ENCODE measurements at regions of chr1 and their contacts with region 1.

Region 1: DNA sequence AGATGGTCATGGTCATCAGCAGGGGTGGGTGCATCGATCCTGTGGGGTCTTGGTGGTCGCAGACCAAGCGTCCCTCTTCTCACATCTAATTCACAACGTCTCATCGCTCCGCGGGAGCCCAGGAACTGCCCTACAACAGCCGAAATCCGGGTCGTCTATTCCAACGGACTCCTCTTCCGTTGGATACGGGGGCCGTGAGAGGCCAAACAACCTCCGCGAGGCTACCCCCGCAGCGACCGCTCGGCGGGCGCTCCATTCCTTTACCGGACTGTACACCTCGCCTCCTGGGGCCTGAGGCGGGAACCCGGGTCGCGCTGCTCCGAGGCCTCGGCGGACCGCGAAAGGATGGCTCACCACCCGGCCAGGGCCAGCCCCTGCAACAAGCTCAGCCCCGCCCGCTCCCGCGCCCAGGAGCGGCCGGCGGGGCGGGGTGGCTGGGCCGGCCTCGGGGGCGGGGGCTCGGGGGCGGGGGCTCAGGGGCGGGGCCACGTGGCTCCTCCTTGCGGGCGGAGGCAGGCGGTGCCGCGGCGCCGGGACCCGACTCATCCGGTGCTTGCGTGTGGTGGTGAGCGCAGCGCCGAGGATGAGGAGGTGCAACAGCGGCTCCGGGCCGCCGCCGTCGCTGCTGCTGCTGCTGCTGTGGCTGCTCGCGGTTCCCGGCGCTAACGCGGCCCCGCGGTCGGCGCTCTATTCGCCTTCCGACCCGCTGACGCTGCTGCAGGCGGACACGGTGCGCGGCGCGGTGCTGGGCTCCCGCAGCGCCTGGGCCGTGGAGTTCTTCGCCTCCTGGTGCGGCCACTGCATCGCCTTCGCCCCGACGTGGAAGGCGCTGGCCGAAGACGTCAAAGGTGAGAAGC is at the start of gene QSOX1:
- DNase-seq: peak; percentile 86
- ATAC-seq: peak; percentile 80
- H3K4me3 ChIP-seq: peak within 1 kb of the TSS; percentile 94
- H3K27ac ChIP-seq: peak within 1 kb of the TSS; percentile 99
- H3K4me1 ChIP-seq: peaks cover 33% of the 10 kb centered on the region
- H3K27me3 ChIP-seq: no peaks in the 10 kb centered on the region
- CTCF ChIP-seq: 0 out of 2 replicates have a peak, but pooled peaks have one; percentile 11
- POLR2A ChIP-seq: peak; percentile 95
- RAD21 ChIP-seq: peak; percentile 18
- total RNA-seq, gene QSOX1: 93.3 and 102 TPM in 2 replicates

Region 2: DNA sequence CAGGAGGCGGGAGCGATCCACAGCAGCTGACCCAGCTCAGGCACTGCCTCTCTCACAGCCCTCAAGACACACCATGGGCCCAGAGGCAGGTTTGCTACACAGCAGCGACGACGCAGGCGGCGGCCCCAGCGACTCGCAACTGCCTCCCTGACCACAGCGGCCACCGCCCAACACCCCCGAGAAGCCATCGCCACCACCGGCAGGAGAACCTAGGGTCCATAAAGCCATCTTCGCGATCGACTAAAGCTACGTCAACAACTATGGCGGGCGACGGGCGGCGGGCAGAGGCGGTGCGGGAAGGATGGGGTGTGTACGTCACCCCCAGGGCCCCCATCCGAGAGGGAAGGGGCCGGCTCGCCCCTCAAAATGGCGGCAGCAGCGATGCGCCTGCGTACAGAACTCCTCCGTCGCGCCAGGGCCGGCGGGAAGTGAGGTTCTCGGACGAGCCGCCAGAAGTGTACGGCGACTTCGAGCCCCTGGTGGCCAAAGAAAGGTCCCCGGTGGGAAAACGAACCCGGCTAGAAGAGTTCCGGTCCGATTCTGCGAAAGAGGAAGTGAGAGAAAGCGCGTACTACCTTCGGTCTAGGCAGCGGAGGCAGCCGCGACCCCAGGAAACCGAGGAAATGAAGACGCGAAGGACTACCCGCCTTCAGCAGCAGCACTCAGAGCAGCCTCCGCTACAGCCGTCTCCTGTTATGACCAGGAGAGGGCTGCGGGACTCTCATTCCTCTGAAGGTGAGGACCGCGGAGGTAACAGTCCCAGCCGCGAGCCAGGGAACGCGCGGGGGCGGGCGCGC is 272.1 kb before region 1 on chr1 and contains the start of gene TOR1AIP1:
- CTCF ChIA-PET with region 1: no interaction called
- POLR2A ChIA-PET with region 1: interaction called, 3 read pairs
- dilution Hi-C with region 1: no loop called
- in situ Hi-C with region 1: no loop called
- intact Hi-C with region 1: loop called (anchors 5 kb)
- DNase-seq: peak; percentile 97
- ATAC-seq: peak; percentile 87
- H3K4me3 ChIP-seq: peak within 1 kb of the TSS; percentile 68
- H3K27ac ChIP-seq: peak within 1 kb of the TSS; percentile 94
- H3K4me1 ChIP-seq: no peaks in the 10 kb centered on the region
- H3K27me3 ChIP-seq: no peaks in the 10 kb centered on the region
- CTCF ChIP-seq: 0 out of 2 replicates have a peak, but pooled peaks have one; percentile 17
- POLR2A ChIP-seq: peak; percentile 97
- RAD21 ChIP-seq: no peak
- total RNA-seq, gene TOR1AIP1: 36.7 and 64.5 TPM in 2 replicates

Region 3: GRCh38 chr1:180040034-180040433 is 114.5 kb before region 1 on chr1:
- CTCF ChIA-PET with region 1: no interaction called
- POLR2A ChIA-PET with region 1: interaction called, 3 read pairs
- dilution Hi-C with region 1: loop called (anchors 25 kb)
- in situ Hi-C with region 1: no loop called
- intact Hi-C with region 1: loop called (anchors 2 kb)
- DNase-seq: peak; percentile 37
- ATAC-seq: no peak
- H3K4me3 ChIP-seq: no peak overlapping the region
- H3K27ac ChIP-seq: 0 out of 2 replicates have a peak overlapping the region, but pooled peaks have one; percentile 22
- H3K4me1 ChIP-seq: peaks cover 7% of the 10 kb centered on the region
- H3K27me3 ChIP-seq: no peaks in the 10 kb centered on the region
- CTCF ChIP-seq: no peak
- POLR2A ChIP-seq: no peak
- RAD21 ChIP-seq: no peak

Region 4: DNA sequence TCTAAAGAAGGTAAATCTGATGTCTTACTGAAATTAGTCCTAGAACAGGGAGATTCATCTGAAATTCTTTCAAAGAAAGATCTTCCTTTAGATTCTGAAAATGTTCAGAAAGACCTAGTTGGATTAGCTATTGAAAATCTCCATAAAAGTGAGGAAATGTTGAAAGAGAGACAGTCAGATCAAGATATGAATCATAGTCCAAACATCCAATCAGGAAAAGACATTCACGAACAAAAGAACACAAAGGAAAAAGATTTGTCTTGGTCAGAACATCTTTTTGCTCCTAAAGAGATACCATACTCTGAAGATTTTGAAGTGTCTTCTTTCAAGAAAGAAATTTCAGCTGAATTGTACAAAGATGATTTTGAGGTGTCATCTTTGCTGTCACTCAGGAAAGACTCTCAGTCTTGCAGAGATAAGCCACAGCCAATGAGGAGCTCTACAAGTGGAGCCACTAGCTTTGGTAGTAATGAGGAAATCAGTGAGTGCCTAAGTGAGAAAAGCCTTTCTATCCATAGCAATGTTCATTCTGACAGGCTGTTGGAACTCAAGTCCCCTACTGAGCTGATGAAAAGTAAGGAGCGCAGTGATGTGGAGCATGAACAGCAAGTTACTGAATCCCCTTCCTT is 61.5 kb before region 1 on chr1:
- CTCF ChIA-PET with region 1: no interaction called
- POLR2A ChIA-PET with region 1: no interaction called
- dilution Hi-C with region 1: no loop called
- in situ Hi-C with region 1: loop called (anchors 5 kb)
- intact Hi-C with region 1: loop called (anchors 1 kb)
- DNase-seq: peak; percentile 30
- ATAC-seq: no peak
- H3K4me3 ChIP-seq: no peak overlapping the region
- H3K27ac ChIP-seq: peak overlapping the region; percentile 66; the same call in 1 of the 2 replicates
- H3K4me1 ChIP-seq: peaks cover 19% of the 10 kb centered on the region
- H3K27me3 ChIP-seq: no peaks in the 10 kb centered on the region
- CTCF ChIP-seq: no peak
- POLR2A ChIP-seq: no peak
- RAD21 ChIP-seq: no peak